Stomach (tissue), 19 donors: ENCODE measurements at regions of chr6 and their contacts with region 1.

Region 1: GRCh38 chr6:56292505-56293181 is 45.3 kb upstream of the COL21A1 start:
- DNase-seq: peak in 1 of 2 donors; percentile 82
- H3K4me3 ChIP-seq: no peak overlapping the region
- H3K27ac ChIP-seq: no peak overlapping the region
- H3K4me1 ChIP-seq: no peaks in the 10 kb centered on the region
- H3K27me3 ChIP-seq: no peaks in the 10 kb centered on the region
- CTCF ChIP-seq: peak in 4 of 7 experiments; percentile 10 to 46 (median 36)
- EP300 ChIP-seq: no peak
- POLR2A ChIP-seq: no peak

Region 2: DNA sequence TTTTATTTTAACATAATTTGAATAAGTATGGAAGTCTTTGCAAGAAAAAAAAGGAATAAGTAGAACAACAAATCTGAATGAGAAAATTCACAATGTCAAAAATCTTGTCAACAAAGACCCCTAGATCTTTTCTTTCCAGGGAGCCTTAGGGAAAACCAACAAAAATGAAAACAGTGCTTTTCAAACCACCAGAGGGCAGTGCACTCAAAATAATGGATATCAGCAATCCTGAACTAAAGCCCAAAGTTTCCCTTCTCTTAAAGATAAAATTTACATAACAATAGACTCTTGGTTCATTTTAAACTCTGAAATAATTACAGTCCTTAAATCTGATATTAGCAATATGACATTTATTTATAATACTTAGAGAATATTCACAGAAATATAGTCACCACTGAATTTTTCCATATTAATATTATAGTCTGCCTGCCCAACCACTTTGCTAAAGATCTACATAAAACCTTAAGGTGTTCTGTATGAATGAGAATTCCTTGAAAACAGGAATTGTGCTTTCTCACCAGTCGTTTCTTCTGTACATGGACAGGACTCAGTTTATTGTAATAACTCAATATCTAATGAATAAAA is 311.9 kb before region 1 on chr6:
- intact Hi-C with region 1: loop called (anchors 5 kb)
- DNase-seq: peak in 1 of 2 donors; percentile 72
- H3K4me3 ChIP-seq: no peak overlapping the region
- H3K27ac ChIP-seq: no peak overlapping the region
- H3K4me1 ChIP-seq: no peaks in the 10 kb centered on the region
- H3K27me3 ChIP-seq: no peaks in the 10 kb centered on the region
- CTCF ChIP-seq: peak in 5 of 7 experiments; percentile 42 to 64 (median 47)
- EP300 ChIP-seq: no peak
- POLR2A ChIP-seq: no peak

Region 3: DNA sequence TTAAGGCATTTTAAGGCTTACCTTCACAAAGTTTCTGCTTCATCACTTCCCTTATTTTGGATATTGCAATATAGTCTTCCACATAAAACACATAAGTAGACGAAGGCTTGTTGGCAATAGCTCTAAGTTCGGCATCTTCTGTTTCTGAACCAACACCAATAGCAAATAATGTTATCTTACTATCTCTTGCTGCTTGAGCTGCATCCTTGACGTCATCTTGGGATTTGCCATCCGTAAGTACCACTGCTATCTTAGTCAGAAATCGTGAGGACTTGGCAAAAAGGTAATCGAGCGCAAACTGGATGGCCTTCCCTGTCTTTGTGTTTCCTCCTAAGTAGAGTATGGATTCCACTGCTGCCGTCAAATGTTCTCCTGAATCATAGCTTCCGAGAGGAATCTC is 113.1 kb before region 1 on chr6:
- intact Hi-C with region 1: no loop called
- DNase-seq: no peak
- H3K4me3 ChIP-seq: no peak overlapping the region
- H3K27ac ChIP-seq: no peak overlapping the region
- H3K4me1 ChIP-seq: peaks cover 0 to 4% (median 0%) of the 10 kb centered on the region in 4 donors
- H3K27me3 ChIP-seq: no peaks in the 10 kb centered on the region
- CTCF ChIP-seq: no peak
- EP300 ChIP-seq: no peak
- POLR2A ChIP-seq: no peak